ENCODE measurements at regions of chr18 and their contacts with region 1.

Region 1: DNA sequence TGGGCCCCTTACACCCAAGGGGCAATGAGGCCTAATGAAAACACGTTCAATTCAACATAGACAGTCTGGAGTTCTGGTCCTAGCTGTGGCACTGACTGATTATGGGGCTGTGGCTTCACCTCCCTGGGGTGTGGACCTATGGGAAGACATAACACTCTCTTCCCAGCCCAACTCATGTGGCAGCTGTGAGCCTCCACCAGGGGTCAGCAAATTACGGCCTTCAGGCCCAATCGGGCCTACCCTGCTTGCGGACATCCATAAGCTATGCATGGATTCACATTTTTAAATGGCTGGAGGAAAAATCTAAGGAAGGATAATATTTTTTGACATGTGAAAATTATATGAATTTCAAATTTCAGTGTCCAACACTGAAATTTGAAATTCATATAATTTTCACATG is 101.3 kb downstream of the LOXHD1 start:
- DNase-seq: peak; percentile 77
- ATAC-seq: peak; percentile 99
- H3K4me3 Mint-ChIP-seq: no peak overlapping the region
- H3K27ac Mint-ChIP-seq: no peak overlapping the region
- H3K4me1 Mint-ChIP-seq: no peaks in the 10 kb centered on the region
- H3K27me3 Mint-ChIP-seq: no peaks in the 10 kb centered on the region; the same call in 1 of the 2 replicates
- CTCF ChIP-seq: peak; percentile 66

Region 2: GRCh38 chr18:46469186-46469915 is 86.4 kb before region 1 on chr18:
- CTCF ChIA-PET with region 1: no interaction called
- POLR2A ChIA-PET with region 1: no interaction called
- DNase-seq: no peak
- ATAC-seq: no peak; the same call in 1 of the 2 replicates
- H3K4me3 Mint-ChIP-seq: no peak overlapping the region
- H3K27ac Mint-ChIP-seq: no peak overlapping the region; the same call in 1 of the 2 replicates
- H3K4me1 Mint-ChIP-seq: peaks cover 41% of the 10 kb centered on the region
- H3K27me3 Mint-ChIP-seq: peaks cover 4% of the 10 kb centered on the region; the same call in 1 of the 2 replicates
- CTCF ChIP-seq: no peak

Region 3: GRCh38 chr18:46518438-46518837 is 37.3 kb before region 1 on chr18:
- CTCF ChIA-PET with region 1: interaction called, 12 read pairs
- POLR2A ChIA-PET with region 1: no interaction called
- DNase-seq: peak; percentile 38
- ATAC-seq: peak; percentile 68
- H3K4me3 Mint-ChIP-seq: no peak overlapping the region
- H3K27ac Mint-ChIP-seq: no peak overlapping the region
- H3K4me1 Mint-ChIP-seq: no peaks in the 10 kb centered on the region
- H3K27me3 Mint-ChIP-seq: peaks cover 2% of the 10 kb centered on the region
- CTCF ChIP-seq: no peak

Region 4: DNA sequence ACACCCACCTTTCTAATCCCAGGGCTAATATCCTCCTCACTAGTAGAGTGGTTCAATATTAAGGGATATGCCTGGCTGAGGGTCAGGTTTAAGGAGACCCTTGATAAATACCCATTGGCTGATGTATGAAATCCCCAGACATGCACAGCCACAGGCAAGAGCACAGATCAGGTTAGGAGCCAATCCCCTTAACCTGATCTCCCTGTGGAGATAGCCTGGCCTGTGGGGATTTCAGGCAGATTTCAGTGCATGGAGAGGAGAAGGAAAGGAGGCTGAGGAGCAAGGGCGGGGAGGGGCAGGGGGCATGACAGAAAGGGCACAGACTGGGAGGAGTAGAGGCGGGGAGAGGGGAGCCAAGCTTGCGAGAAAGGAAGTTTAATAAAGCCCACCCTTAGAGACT is 27.7 kb before region 1 on chr18:
- CTCF ChIA-PET with region 1: interaction called, 12 read pairs
- POLR2A ChIA-PET with region 1: no interaction called
- DNase-seq: no peak
- ATAC-seq: no peak
- H3K4me3 Mint-ChIP-seq: no peak overlapping the region
- H3K27ac Mint-ChIP-seq: peak overlapping the region; percentile 45; the same call in 1 of the 2 replicates
- H3K4me1 Mint-ChIP-seq: no peaks in the 10 kb centered on the region
- H3K27me3 Mint-ChIP-seq: no peaks in the 10 kb centered on the region
- CTCF ChIP-seq: no peak

Region 5: GRCh38 chr18:46622999-46623398 is 67.3 kb after region 1 on chr18:
- CTCF ChIA-PET with region 1: interaction called, 29 read pairs
- POLR2A ChIA-PET with region 1: no interaction called
- DNase-seq: no peak
- ATAC-seq: no peak
- H3K4me3 Mint-ChIP-seq: no peak overlapping the region
- H3K27ac Mint-ChIP-seq: no peak overlapping the region
- H3K4me1 Mint-ChIP-seq: peaks cover 9% of the 10 kb centered on the region
- H3K27me3 Mint-ChIP-seq: no peaks in the 10 kb centered on the region
- CTCF ChIP-seq: no peak

Region 6: GRCh38 chr18:46641917-46642316 is 86.2 kb after region 1 on chr18:
- CTCF ChIA-PET with region 1: interaction called, 11 read pairs
- POLR2A ChIA-PET with region 1: no interaction called
- DNase-seq: no peak
- ATAC-seq: no peak
- H3K4me3 Mint-ChIP-seq: no peak overlapping the region
- H3K27ac Mint-ChIP-seq: no peak overlapping the region
- H3K4me1 Mint-ChIP-seq: no peaks in the 10 kb centered on the region
- H3K27me3 Mint-ChIP-seq: peaks cover 5% of the 10 kb centered on the region; the same call in 1 of the 2 replicates
- CTCF ChIP-seq: no peak

Region 7: DNA sequence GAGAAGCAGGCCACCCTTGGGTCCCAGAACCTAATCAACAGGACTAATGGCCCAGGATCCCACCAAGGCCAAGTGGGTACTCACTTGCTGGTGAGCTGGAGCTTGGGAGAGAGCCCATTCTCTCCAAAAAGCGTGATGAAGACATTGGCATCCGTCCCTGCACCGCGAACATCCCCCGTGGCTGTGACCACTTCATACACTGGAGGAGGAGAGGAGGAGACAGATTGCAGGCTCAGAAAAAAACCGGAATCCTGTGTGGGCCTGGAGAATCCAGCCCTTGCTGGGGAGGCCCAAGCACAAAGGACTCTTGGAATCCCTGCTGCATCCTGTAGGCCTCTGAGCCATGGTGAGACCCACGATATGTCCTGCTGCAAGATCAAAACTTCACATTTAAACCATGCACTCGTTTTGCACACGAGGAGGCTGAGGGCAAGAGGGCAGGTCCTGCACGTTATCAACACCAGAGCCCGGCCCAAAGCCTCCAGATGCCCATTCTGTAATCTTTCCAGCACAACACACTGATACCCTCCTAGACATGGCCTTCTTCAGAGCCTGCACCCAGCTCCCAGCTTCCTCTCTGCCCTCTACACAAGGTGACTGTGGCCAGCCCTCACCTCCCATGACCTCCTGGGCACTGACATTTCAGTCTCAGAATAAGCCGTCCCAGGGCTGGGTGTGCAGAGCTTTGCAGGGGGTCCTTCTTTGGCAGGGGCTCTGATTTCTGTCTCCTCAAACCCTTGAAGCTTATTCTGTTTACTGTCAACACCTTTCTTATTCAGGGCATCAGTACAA is 93.5 kb after region 1 on chr18:
- CTCF ChIA-PET with region 1: interaction called, 11 read pairs
- POLR2A ChIA-PET with region 1: no interaction called
- DNase-seq: no peak
- ATAC-seq: no peak
- H3K4me3 Mint-ChIP-seq: no peak overlapping the region
- H3K27ac Mint-ChIP-seq: no peak overlapping the region
- H3K4me1 Mint-ChIP-seq: no peaks in the 10 kb centered on the region
- H3K27me3 Mint-ChIP-seq: no peaks in the 10 kb centered on the region
- CTCF ChIP-seq: no peak

Measured in WTC11 (cell line).